ENCODE measurements at regions of chr3 and their contacts with region 1.

Region 1: DNA sequence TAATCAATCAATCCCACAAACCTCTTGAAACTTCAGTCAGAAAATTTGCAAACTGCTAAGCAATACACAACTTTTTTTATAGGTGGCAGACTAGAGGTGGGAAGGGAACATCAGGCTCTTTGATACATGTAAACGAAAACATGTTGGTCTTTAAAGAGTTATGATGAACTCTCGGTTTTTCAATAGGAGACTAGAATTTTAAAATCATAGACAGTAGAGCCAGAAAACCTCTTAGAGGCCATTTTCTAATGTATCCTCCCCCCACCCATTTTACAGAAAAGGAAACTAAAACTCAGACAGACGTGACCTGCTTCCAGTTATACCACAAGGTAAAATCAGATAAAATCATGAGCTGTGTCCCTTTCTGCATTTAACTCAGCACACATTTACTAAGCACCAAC is 179.1 kb upstream of the LPP start:
- DNase-seq: peak; percentile 73
- H3K4me3 Mint-ChIP-seq: peak overlapping the region; percentile 73
- H3K27ac Mint-ChIP-seq: peak overlapping the region; percentile 94
- H3K4me1 Mint-ChIP-seq: peaks cover 63% of the 10 kb centered on the region
- H3K27me3 Mint-ChIP-seq: no peaks in the 10 kb centered on the region

Region 2: DNA sequence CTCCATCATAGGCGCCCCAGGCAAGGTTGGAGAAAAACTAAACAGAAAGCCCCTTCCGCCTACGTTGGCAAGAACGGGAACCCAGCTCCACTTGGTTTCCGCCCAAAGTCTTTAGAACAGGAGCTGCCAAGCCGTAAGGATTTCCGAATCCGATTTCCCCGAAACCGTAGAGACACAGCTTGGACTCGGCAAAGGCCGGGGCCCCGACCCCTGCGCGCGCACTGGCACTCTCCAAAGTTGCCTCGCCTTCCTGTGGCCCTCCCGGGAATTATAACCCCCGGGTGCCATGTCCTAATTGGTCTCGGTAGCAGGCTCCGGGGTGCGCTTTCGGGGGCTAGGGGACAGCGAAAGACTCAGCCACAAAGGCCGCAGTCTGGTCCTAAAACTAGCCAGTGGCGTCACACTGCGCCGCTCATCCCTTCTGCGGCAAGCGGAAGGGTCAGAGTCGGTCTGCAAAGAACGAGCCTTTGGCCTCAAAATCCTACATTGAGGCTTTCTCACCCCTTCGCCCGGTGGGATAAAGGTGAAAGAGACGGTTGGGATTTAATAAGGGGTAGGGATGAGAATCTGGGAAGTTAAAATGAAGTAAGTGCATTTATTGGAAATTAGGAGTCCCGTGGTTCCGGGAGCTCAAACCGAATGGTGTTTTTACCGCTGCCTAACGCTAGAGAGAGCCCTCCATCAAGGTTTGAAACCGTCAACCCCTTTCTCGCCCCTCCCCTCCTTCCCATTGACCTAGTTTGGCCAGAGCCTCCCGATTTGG is 236.4 kb before region 1 on chr3:
- intact Hi-C with region 1: loop called (anchors 1 kb)
- DNase-seq: peak; percentile 92
- H3K4me3 Mint-ChIP-seq: peak overlapping the region; percentile 98
- H3K27ac Mint-ChIP-seq: peak overlapping the region; percentile 99
- H3K4me1 Mint-ChIP-seq: peaks cover 51% of the 10 kb centered on the region
- H3K27me3 Mint-ChIP-seq: no peaks in the 10 kb centered on the region

Region 3: GRCh38 chr3:187935623-187936156 is 39.2 kb before region 1 on chr3:
- intact Hi-C with region 1: loop called (anchors 1 kb)
- DNase-seq: peak; percentile 74
- H3K4me3 Mint-ChIP-seq: peak overlapping the region; percentile 43
- H3K27ac Mint-ChIP-seq: peak overlapping the region; percentile 53
- H3K4me1 Mint-ChIP-seq: peaks cover 28% of the 10 kb centered on the region
- H3K27me3 Mint-ChIP-seq: peaks cover 13% of the 10 kb centered on the region

Region 4: GRCh38 chr3:188061133-188061532 is 86.3 kb after region 1 on chr3:
- intact Hi-C with region 1: loop called (anchors 2 kb)
- DNase-seq: peak; percentile 85
- H3K4me3 Mint-ChIP-seq: peak overlapping the region; percentile 66
- H3K27ac Mint-ChIP-seq: peak overlapping the region; percentile 88
- H3K4me1 Mint-ChIP-seq: peaks cover 32% of the 10 kb centered on the region
- H3K27me3 Mint-ChIP-seq: no peaks in the 10 kb centered on the region

Region 5: DNA sequence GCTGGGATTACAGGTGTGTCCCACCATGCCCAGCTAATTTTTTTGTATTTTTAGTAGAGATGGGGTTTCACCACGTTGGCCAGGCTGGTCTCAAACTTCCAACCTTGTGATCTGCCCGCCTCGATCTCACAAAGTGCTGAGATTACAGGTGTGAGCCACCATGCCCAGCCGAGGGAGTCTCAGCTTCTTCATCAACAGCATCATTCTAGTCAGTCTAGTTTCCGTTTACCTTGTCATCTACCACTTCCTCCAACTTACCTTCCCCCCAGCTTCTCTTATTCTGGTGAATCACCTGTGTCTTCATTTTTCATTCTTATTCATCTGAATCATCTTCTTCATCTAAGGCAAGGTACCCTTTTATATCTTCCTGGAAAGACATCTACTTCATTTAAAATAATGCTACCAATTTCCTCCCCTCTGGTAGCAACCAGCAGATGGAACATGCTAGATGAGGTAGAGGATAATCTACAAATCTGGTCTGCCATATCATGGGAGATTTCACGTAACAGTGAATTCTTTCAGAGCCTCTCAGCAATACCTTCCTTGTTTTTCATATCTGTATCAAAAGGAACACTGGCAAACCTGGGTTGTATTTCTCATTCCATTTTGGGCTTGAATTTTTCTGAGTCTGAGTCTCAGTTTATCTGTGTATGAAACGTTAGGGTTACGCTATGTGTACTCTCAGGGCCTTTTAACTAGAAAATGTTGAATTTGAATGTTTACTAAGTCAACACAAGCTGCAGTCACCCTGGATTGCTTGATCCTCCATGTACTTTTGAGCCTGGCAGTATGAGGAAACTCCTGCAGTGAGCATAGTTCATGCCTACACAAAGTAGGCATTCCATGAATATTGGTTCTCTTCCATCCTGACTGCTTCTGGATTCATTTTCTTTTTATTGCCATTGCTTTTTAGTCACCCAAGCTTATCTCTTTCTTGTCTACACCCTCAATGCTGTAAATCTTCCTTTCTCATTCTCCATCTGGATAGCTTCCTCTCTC is 195.9 kb after region 1 on chr3:
- intact Hi-C with region 1: loop called (anchors 5 kb)
- DNase-seq: peak; percentile 79
- H3K4me3 Mint-ChIP-seq: peak overlapping the region; percentile 4
- H3K27ac Mint-ChIP-seq: peak overlapping the region; percentile 85
- H3K4me1 Mint-ChIP-seq: peaks cover 39% of the 10 kb centered on the region
- H3K27me3 Mint-ChIP-seq: no peaks in the 10 kb centered on the region

Region 6: GRCh38 chr3:188197388-188197847 is 222.5 kb after region 1 on chr3:
- intact Hi-C with region 1: no loop called
- DNase-seq: no peak
- H3K4me3 Mint-ChIP-seq: no peak overlapping the region
- H3K27ac Mint-ChIP-seq: no peak overlapping the region
- H3K4me1 Mint-ChIP-seq: peaks cover 27% of the 10 kb centered on the region
- H3K27me3 Mint-ChIP-seq: no peaks in the 10 kb centered on the region

Region 7: DNA sequence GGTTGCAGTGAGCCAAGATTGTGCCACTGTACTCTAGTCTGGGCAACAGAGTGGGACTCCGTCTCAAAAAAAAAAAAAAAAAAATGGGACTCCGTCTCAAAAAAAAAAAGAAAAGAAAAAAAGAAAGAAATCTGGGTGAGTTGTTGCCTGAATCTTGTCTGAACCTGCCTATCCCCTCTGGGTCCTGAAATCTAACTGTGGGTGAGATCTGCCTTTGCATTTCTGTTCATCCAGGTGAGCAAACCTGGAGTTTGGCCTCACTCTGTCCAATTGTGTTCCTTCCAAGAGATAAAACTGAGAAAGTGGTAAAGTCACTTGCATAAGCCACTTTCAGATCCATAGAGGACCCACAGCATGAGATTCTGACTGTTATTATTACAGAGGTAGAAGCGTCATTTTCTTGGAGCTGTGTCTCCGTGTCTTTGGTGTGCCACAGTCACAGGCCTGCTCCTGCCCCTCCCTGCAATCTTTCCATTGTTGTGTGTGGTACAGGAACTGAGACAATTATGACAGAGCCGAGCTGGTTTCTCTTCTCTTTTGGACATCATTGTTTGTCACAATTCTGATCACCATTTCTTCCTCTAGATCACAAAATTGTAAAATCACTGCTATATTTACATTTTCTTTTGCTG is 415.0 kb after region 1 on chr3:
- intact Hi-C with region 1: loop called (anchors 10 kb)
- DNase-seq: peak; percentile 84
- H3K4me3 Mint-ChIP-seq: peak overlapping the region; percentile 49
- H3K27ac Mint-ChIP-seq: peak overlapping the region; percentile 90
- H3K4me1 Mint-ChIP-seq: peaks cover 42% of the 10 kb centered on the region
- H3K27me3 Mint-ChIP-seq: no peaks in the 10 kb centered on the region